Heart left ventricle (tissue), 16 donors: ENCODE measurements at regions of chr13 and their contacts with region 1.

Region 1: GRCh38 chr13:39942552-39943273 is 287.3 kb downstream of the COG6 start:
- DNase-seq: peak in 4 of 5 donors; percentile 44 to 68 (median 60)
- ATAC-seq: peak; percentile 61 to 97 (median 88)
- H3K4me3 ChIP-seq: no peak overlapping the region
- H3K27ac ChIP-seq: no peak overlapping the region
- H3K4me1 ChIP-seq: peaks cover 0 to 6% (median 0%) of the 10 kb centered on the region in 12 donors
- H3K27me3 ChIP-seq: no peaks in the 10 kb centered on the region
- CTCF ChIP-seq: peak; percentile 84 to 99 (median 90)
- POLR2A ChIP-seq: no peak

Region 2: DNA sequence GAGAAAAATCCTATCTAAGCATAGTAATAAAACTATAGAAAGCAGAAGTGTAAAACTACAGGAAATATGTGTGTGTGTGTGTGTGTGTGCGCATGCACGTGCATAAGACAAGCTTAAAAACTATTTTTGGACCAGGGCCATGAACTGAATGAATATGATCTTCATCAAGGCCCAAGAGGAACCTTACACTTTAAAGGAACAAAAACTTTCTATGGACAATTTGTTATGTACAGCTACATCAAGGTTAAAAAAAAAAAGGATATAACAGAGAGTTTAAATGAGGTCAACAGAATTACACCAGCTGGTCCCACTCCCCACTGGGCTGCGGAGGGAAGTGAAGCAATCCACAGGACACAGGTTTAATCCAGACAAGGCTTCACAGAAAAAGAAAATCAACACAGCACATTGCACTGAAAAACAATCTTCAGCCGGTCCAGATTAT is 490.8 kb before region 1 on chr13:
- intact Hi-C with region 1: no loop called
- DNase-seq: peak; percentile 49 to 71 (median 63)
- ATAC-seq: peak; percentile 59 to 83 (median 78)
- H3K4me3 ChIP-seq: no peak overlapping the region
- H3K27ac ChIP-seq: peak overlapping the region; percentile 66 to 84 (median 78)
- H3K4me1 ChIP-seq: peaks cover 17 to 90% (median 76%) of the 10 kb centered on the region in 12 donors
- H3K27me3 ChIP-seq: no peaks in the 10 kb centered on the region
- CTCF ChIP-seq: no peak
- POLR2A ChIP-seq: no peak

Region 3: GRCh38 chr13:39765801-39766463 is 176.8 kb before region 1 on chr13:
- intact Hi-C with region 1: loop called in 4 of 10 experiments (anchors 5 to 10 kb)
- DNase-seq: peak in 4 of 5 donors; percentile 25 to 58 (median 44)
- ATAC-seq: peak; percentile 67 to 91 (median 87)
- H3K4me3 ChIP-seq: no peak overlapping the region
- H3K27ac ChIP-seq: peak overlapping the region in 1 of 12 donors; percentile 11
- H3K4me1 ChIP-seq: peaks cover 0 to 24% (median 3%) of the 10 kb centered on the region in 12 donors
- H3K27me3 ChIP-seq: no peaks in the 10 kb centered on the region
- CTCF ChIP-seq: peak in 10 of 12 donors; percentile 16 to 49 (median 35)
- POLR2A ChIP-seq: no peak

Region 4: GRCh38 chr13:39777527-39778061 is 165.1 kb before region 1 on chr13:
- intact Hi-C with region 1: loop called in 3 of 10 experiments (anchors 5 to 10 kb)
- DNase-seq: peak in 1 of 5 donors; percentile 31
- ATAC-seq: peak in 1 of 4 donors; percentile 46
- H3K4me3 ChIP-seq: no peak overlapping the region
- H3K27ac ChIP-seq: no peak overlapping the region
- H3K4me1 ChIP-seq: peaks cover 0 to 20% (median 0%) of the 10 kb centered on the region in 12 donors
- H3K27me3 ChIP-seq: no peaks in the 10 kb centered on the region
- CTCF ChIP-seq: peak in 6 of 12 donors; percentile 2 to 32 (median 16)
- POLR2A ChIP-seq: no peak

Region 5: GRCh38 chr13:39787086-39787487 is 155.6 kb before region 1 on chr13:
- intact Hi-C with region 1: loop called in 2 of 10 experiments (anchors 5 kb)
- DNase-seq: peak in 1 of 5 donors; percentile 11
- ATAC-seq: peak in 3 of 4 donors; percentile 41 to 62 (median 48)
- H3K4me3 ChIP-seq: no peak overlapping the region
- H3K27ac ChIP-seq: peak overlapping the region in 2 of 12 donors; percentile 21 to 36
- H3K4me1 ChIP-seq: peaks cover 0 to 26% (median 4%) of the 10 kb centered on the region in 12 donors
- H3K27me3 ChIP-seq: peaks cover 0 to 3% (median 0%) of the 10 kb centered on the region in 9 donors
- CTCF ChIP-seq: no peak
- POLR2A ChIP-seq: no peak